Right lobe of liver (tissue), 6 donors: ENCODE measurements at regions of chr9 and their contacts with region 1.

Region 1: DNA sequence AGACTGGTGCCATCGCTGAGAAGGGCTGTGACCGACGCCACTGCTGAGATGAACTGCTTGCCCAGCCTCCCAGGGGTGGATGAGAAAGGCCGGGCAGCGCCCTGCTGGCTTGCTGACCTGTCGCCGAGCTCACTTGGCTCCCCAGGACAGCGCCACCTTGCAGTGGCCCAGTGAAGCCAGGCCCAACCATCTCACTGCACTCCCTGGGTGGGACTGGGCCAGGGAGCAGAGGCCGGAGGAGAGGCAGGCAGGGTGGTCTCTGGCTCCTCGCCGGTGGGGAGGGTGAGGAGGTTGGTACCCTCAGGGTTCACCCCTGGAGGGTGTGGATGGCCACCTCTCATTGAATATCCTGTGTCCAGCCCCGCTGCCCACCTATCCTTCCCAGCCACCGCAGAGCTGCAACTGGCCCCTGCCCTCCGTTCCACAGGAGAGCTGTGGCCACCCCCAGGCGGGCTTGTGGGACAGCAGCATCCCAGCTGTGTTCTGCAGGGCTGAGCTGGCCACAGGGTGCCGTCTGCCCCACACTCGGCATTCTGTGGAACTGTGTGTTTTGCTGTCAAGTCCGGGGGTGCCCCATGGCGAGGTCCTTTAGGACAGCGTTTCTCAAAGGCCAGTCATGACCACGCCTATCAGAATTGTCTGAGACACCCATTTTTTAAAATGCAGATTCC is 41.0 kb upstream of the FCN2 start:
- DNase-seq: no peak
- ATAC-seq: no peak
- H3K4me3 ChIP-seq: no peak overlapping the region
- H3K27ac ChIP-seq: no peak overlapping the region
- H3K4me1 ChIP-seq: no peaks in the 10 kb centered on the region
- H3K27me3 ChIP-seq: no peaks in the 10 kb centered on the region
- CTCF ChIP-seq: no peak
- POLR2A ChIP-seq: no peak

Region 2: DNA sequence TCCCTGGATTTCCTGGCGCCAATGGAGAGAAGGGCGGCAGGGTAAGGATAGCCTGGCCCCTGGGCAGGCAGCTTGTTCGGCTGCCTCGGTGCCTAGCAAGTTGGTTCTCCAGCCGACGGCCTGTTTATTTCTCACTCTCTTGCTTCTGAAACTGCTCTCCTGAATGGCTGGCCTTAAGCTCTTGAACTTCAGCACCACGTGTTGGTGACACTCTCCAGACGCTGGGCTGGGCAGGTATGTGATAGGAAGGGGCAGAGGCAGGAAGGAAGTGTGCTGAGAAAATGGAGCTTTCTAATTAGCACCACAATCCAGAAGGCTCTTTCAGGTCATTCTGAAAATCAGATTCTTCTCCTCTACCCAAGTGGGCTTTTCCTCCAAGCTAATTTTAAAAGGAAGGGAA is 50.4 kb before region 1 on chr9:
- intact Hi-C with region 1: loop called in 1 of 2 experiments (anchors 2 kb)
- DNase-seq: no peak
- ATAC-seq: no peak
- H3K4me3 ChIP-seq: no peak overlapping the region
- H3K27ac ChIP-seq: no peak overlapping the region
- H3K4me1 ChIP-seq: no peaks in the 10 kb centered on the region
- H3K27me3 ChIP-seq: no peaks in the 10 kb centered on the region
- CTCF ChIP-seq: no peak
- POLR2A ChIP-seq: no peak